SK-N-SH (cell line): ENCODE measurements at regions of chr19 and their contacts with region 1.

Region 1: DNA sequence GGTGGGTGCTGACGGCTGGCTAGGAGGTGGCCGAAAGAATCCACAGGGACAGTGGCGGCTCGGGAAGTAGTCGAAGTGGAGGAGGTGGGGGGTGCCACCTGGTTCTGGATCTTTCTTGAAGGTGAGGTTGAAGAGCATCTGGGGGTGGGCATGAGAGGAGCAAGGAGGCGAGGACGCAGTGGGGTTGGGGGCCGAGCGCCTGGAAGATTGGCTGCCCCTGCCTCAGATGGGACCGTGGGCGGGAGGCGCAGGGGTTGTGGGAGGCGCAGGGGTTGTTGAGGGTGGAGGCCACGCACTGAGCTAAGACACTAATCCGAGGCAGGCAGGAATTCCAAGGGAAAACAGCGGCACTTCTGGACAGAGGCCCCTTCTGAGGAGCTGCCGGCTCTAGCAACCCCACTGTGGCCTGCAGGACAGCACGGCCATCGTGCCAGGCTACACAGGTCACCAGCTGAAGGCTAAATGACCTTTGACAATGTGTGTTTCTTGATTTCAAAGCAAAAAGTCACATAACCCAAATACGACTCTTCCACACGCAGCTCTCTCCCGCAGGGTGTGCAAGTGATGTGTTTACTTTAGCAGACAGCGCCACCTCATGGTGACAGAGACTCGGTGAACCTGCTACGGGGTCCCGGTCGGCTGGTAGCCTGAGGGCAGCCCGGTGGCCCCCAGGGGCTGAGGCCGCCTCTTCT is 44.1 kb upstream of the RANBP3 start:
- DNase-seq: peak; percentile 92
- H3K4me3 ChIP-seq: peak overlapping the region in 1 of 2 experiments; percentile 39; a peak in 1 of 4 replicates
- H3K27ac ChIP-seq: peak overlapping the region in 1 of 2 experiments; percentile 85; a peak in 1 of 4 replicates
- H3K4me1 ChIP-seq: peaks cover 6 to 10% of the 10 kb centered on the region in 2 experiments; a peak in 3 of 4 replicates
- H3K27me3 ChIP-seq: no peaks in the 10 kb centered on the region
- CTCF ChIP-seq: peak; percentile 74
- EP300 ChIP-seq: no peak
- RAD21 ChIP-seq: peak; percentile 94

Region 2: GRCh38 chr19:5934774-5935472 is 87.1 kb before region 1 on chr19:
- CTCF ChIA-PET with region 1: interaction called, 11 read pairs
- POLR2A ChIA-PET with region 1: no interaction called
- DNase-seq: peak; percentile 91
- H3K4me3 ChIP-seq: no peak overlapping the region
- H3K27ac ChIP-seq: peak overlapping the region; percentile 45 to 94
- H3K4me1 ChIP-seq: peaks cover 13 to 67% of the 10 kb centered on the region in 2 experiments
- H3K27me3 ChIP-seq: no peaks in the 10 kb centered on the region
- CTCF ChIP-seq: no peak
- EP300 ChIP-seq: peak in 1 of 2 experiments; percentile 75; a peak in 1 of 4 replicates
- RAD21 ChIP-seq: no peak

Region 3: GRCh38 chr19:5959666-5960338 is 62.2 kb before region 1 on chr19:
- CTCF ChIA-PET with region 1: interaction called, 11 read pairs
- POLR2A ChIA-PET with region 1: no interaction called
- DNase-seq: peak; percentile 90
- H3K4me3 ChIP-seq: no peak overlapping the region
- H3K27ac ChIP-seq: peak overlapping the region in 1 of 2 experiments; percentile 88; a peak in 2 of 4 replicates
- H3K4me1 ChIP-seq: peaks cover under 1 to 74% of the 10 kb centered on the region in 2 experiments; a peak in 3 of 4 replicates
- H3K27me3 ChIP-seq: no peaks in the 10 kb centered on the region
- CTCF ChIP-seq: no peak
- EP300 ChIP-seq: peak in 1 of 2 experiments; percentile 62; a peak in 1 of 4 replicates
- RAD21 ChIP-seq: no peak

Region 4: DNA sequence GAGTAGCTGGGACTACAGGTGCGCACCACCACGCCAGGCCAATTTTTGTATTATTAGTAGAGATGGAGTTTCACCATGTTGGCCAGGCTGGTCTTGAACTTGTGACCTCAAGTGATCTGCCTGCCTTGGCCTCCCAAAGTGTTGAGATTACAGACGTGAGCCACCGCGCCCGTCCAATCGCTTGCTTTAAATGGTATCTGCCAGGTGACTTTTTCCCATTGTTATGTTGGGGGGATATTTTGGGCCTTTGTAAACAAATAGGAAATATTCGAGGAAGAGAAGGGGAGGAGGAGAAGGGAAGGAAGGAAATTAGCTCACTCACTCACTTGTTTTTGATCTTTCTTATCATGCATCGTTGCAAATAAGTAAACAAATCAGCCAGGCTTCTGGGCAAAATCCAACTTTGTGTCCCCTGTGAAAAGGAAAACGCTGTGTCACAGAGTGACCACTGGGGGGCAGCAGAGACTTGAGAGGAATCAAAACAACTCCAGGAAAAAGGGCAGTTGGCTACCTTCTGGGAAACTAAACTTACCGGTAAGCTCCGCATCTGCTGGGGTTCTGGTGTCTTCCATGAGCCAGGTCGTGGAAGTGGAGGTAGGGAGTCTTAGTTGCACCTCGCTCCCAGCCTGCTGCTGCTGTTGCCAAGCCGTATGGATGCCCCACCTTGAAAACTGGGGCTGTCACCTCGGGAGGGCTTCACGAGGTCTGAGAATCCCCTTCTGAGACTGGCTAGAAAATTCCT is 34.8 kb before region 1 on chr19:
- CTCF ChIA-PET with region 1: interaction called, 448 read pairs
- POLR2A ChIA-PET with region 1: interaction called, 7 read pairs
- DNase-seq: peak; percentile 79
- H3K4me3 ChIP-seq: peak overlapping the region in 1 of 2 experiments; percentile 9; a peak in 1 of 4 replicates
- H3K27ac ChIP-seq: no peak overlapping the region
- H3K4me1 ChIP-seq: peaks cover 3 to 9% of the 10 kb centered on the region in 2 experiments; a peak in 2 of 4 replicates
- H3K27me3 ChIP-seq: no peaks in the 10 kb centered on the region
- CTCF ChIP-seq: peak; percentile 92
- EP300 ChIP-seq: no peak
- RAD21 ChIP-seq: peak; percentile 94

Region 5: GRCh38 chr19:6038634-6039405 is 16.8 kb after region 1 on chr19:
- CTCF ChIA-PET with region 1: interaction called, 57 read pairs
- POLR2A ChIA-PET with region 1: no interaction called
- DNase-seq: no peak
- H3K4me3 ChIP-seq: no peak overlapping the region
- H3K27ac ChIP-seq: no peak overlapping the region
- H3K4me1 ChIP-seq: no peaks in the 10 kb centered on the region
- H3K27me3 ChIP-seq: no peaks in the 10 kb centered on the region
- CTCF ChIP-seq: no peak
- EP300 ChIP-seq: no peak
- RAD21 ChIP-seq: no peak